Gastrocnemius medialis (tissue), 4 donors: ENCODE measurements at regions of chr19 and their contacts with region 1.

Region 1: DNA sequence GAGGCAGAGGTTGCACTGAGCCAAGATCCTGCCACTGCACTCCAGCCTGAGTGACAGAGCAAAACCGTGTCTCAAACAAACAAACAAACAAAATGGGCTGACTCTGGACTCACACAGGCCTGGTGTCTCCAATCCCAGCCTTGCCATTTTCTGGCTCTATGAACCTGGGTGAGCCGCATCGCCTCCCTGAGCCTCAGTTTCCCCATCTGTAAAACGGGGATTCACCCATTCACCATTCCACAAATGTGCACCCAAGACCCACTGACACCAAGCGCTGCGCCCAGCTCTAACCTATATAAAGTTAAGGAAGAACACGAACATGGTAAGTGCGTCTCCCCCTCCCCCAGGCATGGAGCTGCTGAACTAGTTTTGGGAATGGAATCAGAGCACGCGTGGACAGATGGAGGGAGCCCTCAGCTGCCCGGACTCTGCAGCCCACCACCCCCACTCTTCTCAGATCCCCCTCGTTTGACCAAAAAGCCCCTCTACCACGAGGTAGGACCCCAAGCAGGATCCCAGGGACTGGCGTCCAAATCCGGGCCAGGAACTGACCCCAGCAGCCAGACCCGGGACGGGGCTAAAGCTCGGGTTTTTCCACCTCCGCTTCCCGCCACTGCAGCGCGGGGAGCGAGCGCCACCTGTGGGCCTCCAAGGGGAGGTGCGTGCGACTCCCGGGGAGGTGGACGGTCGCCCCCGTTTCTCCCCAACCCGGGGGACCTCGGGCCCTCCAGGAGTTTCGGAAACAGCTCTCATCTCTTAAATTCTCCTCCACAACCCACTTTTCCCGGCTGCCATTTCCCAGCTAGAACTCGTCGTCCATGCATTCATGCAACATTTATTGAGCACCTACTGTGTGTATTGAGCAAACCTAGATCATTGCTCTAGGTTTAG is 33.0 kb upstream of the ADGRE5 start:
- DNase-seq: peak; percentile 25 to 37
- ATAC-seq: peak in 1 of 2 donors; percentile 73
- H3K4me3 ChIP-seq: peak overlapping the region in 3 of 4 donors; percentile 27 to 39 (median 34)
- H3K27ac ChIP-seq: no peak overlapping the region
- H3K4me1 ChIP-seq: peaks cover 0 to 5% of the 10 kb centered on the region in 2 donors
- H3K27me3 ChIP-seq: peaks cover 0 to 4% (median 0%) of the 10 kb centered on the region in 3 donors
- CTCF ChIP-seq: peak; percentile 73 to 98 (median 91)
- POLR2A ChIP-seq: no peak

Region 2: DNA sequence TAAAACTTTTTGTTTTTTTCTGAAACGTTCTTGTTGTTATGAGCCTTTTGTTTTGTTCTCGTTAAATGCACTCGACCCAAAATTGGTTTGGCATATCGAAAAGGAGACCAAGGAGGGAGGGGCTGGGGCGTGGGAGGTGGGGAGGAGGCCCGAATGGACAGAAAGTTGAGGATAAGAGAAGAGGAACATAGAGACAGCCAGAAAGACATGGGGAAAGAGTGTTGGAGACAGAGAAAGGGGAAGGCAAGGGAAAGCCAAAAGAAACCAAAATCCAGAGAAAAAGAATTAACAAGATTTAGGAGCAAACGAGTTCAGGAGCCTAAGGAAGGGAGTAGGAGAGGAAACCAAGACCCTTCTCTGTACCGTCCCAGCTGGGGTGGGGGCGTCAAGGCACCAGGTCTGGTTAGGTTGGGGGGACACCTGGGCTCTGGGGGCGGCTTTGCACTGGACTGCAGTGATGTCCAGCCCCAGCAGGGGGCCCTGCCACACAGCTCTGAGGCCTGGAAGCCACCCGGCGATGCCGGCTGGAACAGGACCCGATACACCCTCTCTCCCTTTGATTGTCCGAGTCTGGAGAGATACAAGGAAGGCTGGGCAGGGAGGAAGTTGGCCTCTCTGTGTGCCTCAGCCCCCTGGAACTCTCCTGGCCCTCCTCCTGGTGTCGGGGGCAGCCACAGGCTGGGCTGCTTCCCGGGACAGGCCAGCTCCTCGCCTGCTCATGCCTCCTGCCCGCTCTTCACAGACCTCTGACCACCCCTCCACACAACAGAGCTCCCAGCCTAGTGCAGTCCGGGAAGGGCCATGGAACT is 200.2 kb before region 1 on chr19:
- in situ Hi-C with region 1: no loop called
- intact Hi-C with region 1: loop called (anchors 2 kb)
- DNase-seq: peak in 1 of 2 donors; percentile 37
- ATAC-seq: peak; percentile 51 to 73
- H3K4me3 ChIP-seq: no peak overlapping the region
- H3K27ac ChIP-seq: peak overlapping the region in 3 of 4 donors; percentile 49 to 76 (median 73)
- H3K4me1 ChIP-seq: peaks cover 11 to 19% of the 10 kb centered on the region in 2 donors
- H3K27me3 ChIP-seq: no peaks in the 10 kb centered on the region
- CTCF ChIP-seq: peak; percentile 59 to 79 (median 71)
- POLR2A ChIP-seq: no peak

Region 3: DNA sequence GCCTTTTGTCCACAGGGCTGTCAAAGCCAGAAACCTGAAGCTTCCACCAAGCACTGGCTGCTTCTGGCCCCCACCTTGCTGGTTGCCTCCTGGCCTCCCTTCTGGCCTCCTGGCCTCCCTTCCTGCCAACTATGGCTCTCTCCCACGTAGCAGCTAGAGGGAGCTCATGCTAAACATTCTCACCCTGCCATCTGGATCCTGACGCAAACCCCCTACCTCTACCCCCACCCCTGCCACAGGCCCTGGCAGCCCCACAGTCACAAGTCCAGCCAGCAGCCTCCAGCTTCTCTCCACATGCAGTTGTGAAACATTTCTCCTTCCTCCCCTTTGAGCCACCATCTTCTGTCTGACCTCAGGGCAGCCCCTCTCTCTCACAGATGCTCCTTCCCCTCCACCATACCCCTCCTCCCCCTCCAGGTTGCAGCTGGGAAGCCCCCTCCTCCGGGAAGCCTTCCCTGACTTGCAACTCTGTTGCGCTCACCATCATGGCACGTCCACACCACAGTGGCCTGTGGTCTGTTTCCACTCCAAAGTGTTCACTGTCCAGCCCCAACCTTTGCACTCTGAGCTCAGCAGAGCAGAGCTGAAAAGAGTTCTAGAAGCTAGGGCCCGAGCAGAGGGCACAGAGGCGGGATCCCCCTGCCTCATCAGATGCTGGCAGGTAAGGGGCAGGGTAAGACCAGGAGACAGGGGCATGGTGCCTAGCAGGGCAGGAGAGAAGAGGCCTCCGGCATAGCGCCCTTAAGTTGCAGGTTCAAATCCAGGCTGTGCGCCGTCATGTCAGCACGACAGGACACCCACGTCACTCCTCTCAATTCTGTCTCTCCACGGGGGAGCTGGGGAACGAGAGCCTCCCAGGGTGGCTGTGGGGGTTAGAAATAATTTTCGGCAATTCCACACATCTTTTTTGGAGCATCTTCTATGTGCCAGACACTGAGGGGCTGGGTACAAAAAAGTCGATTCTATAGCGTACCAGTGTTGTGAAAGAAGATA is 149.6 kb before region 1 on chr19:
- in situ Hi-C with region 1: loop called in 1 of 4 experiments (anchors 10 kb)
- intact Hi-C with region 1: loop called (anchors 5 kb)
- DNase-seq: no peak
- ATAC-seq: no peak
- H3K4me3 ChIP-seq: no peak overlapping the region
- H3K27ac ChIP-seq: no peak overlapping the region
- H3K4me1 ChIP-seq: no peaks in the 10 kb centered on the region
- H3K27me3 ChIP-seq: no peaks in the 10 kb centered on the region
- CTCF ChIP-seq: no peak
- POLR2A ChIP-seq: no peak

Region 4: GRCh38 chr19:14318873-14319272 is 29.4 kb before region 1 on chr19:
- in situ Hi-C with region 1: no loop called
- intact Hi-C with region 1: no loop called
- DNase-seq: no peak
- ATAC-seq: no peak
- H3K4me3 ChIP-seq: no peak overlapping the region
- H3K27ac ChIP-seq: no peak overlapping the region
- H3K4me1 ChIP-seq: no peaks in the 10 kb centered on the region
- H3K27me3 ChIP-seq: no peaks in the 10 kb centered on the region
- CTCF ChIP-seq: no peak
- POLR2A ChIP-seq: no peak

Region 5: DNA sequence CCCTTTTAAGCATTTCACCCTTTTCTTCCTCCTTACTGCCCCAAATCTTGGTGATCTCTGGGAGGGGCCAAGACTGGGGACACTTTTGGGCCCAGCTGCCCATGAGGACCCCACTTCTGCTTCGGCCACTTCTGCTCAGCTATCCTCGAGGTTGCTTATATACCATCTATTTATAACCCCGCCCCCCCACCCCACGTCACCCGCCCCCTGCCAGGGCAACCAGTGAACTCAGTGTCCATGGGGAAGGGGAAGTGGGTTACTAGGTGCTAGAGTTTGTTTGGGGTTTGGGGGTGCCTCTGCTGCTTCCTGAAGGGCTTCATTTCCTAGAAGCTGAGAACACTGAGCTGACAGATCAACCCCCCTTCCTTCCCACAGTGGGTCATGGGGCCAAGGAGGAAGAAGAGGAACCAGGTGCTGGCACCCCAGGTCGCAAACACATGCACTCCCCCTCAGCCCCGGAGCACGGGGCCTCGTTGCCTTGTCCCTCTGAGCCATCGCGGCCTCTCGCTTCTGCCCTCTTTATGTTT is 26.9 kb after region 1 on chr19:
- in situ Hi-C with region 1: no loop called
- intact Hi-C with region 1: no loop called
- DNase-seq: peak; percentile 14 to 48
- ATAC-seq: peak; percentile 3 to 24
- H3K4me3 ChIP-seq: peak overlapping the region in 3 of 4 donors; percentile 15 to 35 (median 29)
- H3K27ac ChIP-seq: peak overlapping the region; percentile 84 to 94 (median 92)
- H3K4me1 ChIP-seq: peaks cover 20% of the 10 kb centered on the region in 2 donors
- H3K27me3 ChIP-seq: no peaks in the 10 kb centered on the region
- CTCF ChIP-seq: no peak
- POLR2A ChIP-seq: no peak